B cell (primary cell): ENCODE measurements at regions of chr6 and their contacts with region 1.

Region 1: DNA sequence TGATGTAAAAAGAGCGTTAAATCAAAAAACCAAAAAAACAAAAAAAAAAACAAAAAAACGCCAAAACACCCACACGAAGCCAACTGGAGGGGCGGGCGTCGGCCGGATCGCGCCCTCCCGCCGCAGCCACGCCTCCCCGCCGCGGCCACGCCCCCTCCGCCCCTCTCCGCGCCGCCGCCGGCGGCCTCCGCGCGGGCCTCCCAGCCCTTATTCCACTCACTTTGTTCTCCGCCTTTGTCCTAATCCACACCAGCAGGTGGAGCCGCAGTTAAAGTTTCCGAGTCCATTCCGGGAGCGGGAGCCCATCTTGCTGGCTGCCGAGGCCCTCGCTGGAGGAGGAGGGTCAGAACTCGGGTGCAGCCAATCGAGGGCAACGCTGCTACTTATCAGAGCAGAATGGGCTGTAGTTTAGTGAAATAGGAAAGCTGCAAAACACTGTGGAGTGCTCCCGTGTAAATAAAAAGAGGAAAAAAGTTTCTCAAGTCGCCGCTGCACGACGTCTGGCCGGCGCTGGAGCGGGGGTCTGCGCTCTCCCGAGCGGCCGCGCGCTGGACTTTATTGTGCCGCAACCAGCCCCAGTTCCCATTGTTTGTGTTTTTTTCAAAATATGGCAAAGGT is at the start of gene ASF1A:
- DNase-seq: peak; percentile 92
- ATAC-seq: peak; percentile 66
- H3K4me3 ChIP-seq: peak within 1 kb of the TSS; percentile 84 to 99 (median 91)
- H3K4me3 Mint-ChIP-seq: peak within 1 kb of the TSS; percentile 91
- H3K27ac ChIP-seq: peak within 1 kb of the TSS; percentile 79 to 84
- H3K27ac Mint-ChIP-seq: peak within 1 kb of the TSS; percentile 95
- H3K4me1 ChIP-seq: peaks cover 33 to 34% of the 10 kb centered on the region in 2 donors
- H3K4me1 Mint-ChIP-seq: peaks cover 58% of the 10 kb centered on the region
- H3K27me3 ChIP-seq: no peaks in the 10 kb centered on the region
- H3K27me3 Mint-ChIP-seq: no peaks in the 10 kb centered on the region
- CTCF ChIP-seq: no peak
- total RNA-seq, gene ASF1A: 25.3 and 27.3 TPM in 2 replicates

Region 2: GRCh38 chr6:117674991-117675657 is 1218.8 kb before region 1 on chr6 and contains the start of gene NUS1:
- CTCF ChIA-PET with region 1: no interaction called
- POLR2A ChIA-PET with region 1: no interaction called
- intact Hi-C with region 1: loop called (anchors 2 kb)
- DNase-seq: peak; percentile 98
- ATAC-seq: peak; percentile 98
- H3K4me3 ChIP-seq: peak within 1 kb of the TSS; percentile 55 to 81 (median 65)
- H3K4me3 Mint-ChIP-seq: peak within 1 kb of the TSS; percentile 90
- H3K27ac ChIP-seq: peak within 1 kb of the TSS; percentile 55 to 75
- H3K27ac Mint-ChIP-seq: peak within 1 kb of the TSS; percentile 94
- H3K4me1 ChIP-seq: peaks cover 28 to 30% of the 10 kb centered on the region in 2 donors
- H3K4me1 Mint-ChIP-seq: peaks cover 42% of the 10 kb centered on the region
- H3K27me3 ChIP-seq: no peaks in the 10 kb centered on the region
- H3K27me3 Mint-ChIP-seq: no peaks in the 10 kb centered on the region
- CTCF ChIP-seq: peak; percentile 75
- total RNA-seq, gene NUS1: 22.1 and 23.1 TPM in 2 replicates

Region 3: GRCh38 chr6:118651282-118652050 is 242.4 kb before region 1 on chr6 and contains the start of gene CEP85L:
- CTCF ChIA-PET with region 1: interaction called, 3 read pairs
- POLR2A ChIA-PET with region 1: interaction called, 4 read pairs
- intact Hi-C with region 1: loop called (anchors 1 kb)
- DNase-seq: peak; percentile 92
- ATAC-seq: peak; percentile 91
- H3K4me3 ChIP-seq: peak within 1 kb of the TSS; percentile 59 to 89 (median 73)
- H3K4me3 Mint-ChIP-seq: peak within 1 kb of the TSS; percentile 98
- H3K27ac ChIP-seq: peak within 1 kb of the TSS; percentile 68 to 86
- H3K27ac Mint-ChIP-seq: peak within 1 kb of the TSS; percentile 96
- H3K4me1 ChIP-seq: peaks cover 12 to 13% of the 10 kb centered on the region in 2 donors
- H3K4me1 Mint-ChIP-seq: peaks cover 24% of the 10 kb centered on the region
- H3K27me3 ChIP-seq: no peaks in the 10 kb centered on the region
- H3K27me3 Mint-ChIP-seq: no peaks in the 10 kb centered on the region
- CTCF ChIP-seq: no peak
- total RNA-seq, gene CEP85L: 32.0 and 32.1 TPM in 2 replicates

Region 4: GRCh38 chr6:118724211-118724610 is 169.7 kb before region 1 on chr6:
- CTCF ChIA-PET with region 1: no interaction called
- POLR2A ChIA-PET with region 1: no interaction called
- intact Hi-C with region 1: loop called (anchors 5 kb)
- DNase-seq: peak; percentile 52
- ATAC-seq: peak; percentile 70
- H3K4me3 ChIP-seq: peak overlapping the region in 2 of 5 experiments; percentile 32 to 62
- H3K4me3 Mint-ChIP-seq: peak overlapping the region; percentile 53
- H3K27ac ChIP-seq: peak overlapping the region in 1 of 2 donors; percentile 61
- H3K27ac Mint-ChIP-seq: peak overlapping the region; percentile 13
- H3K4me1 ChIP-seq: peaks cover 42 to 43% of the 10 kb centered on the region in 2 donors
- H3K4me1 Mint-ChIP-seq: peaks cover 57% of the 10 kb centered on the region
- H3K27me3 ChIP-seq: no peaks in the 10 kb centered on the region
- H3K27me3 Mint-ChIP-seq: no peaks in the 10 kb centered on the region
- CTCF ChIP-seq: no peak

Region 5: GRCh38 chr6:118810420-118811027 is 83.4 kb before region 1 on chr6:
- CTCF ChIA-PET with region 1: interaction called, 20 read pairs
- POLR2A ChIA-PET with region 1: no interaction called
- intact Hi-C with region 1: loop called (anchors 5 kb)
- DNase-seq: peak; percentile 68
- ATAC-seq: peak; percentile 80
- H3K4me3 ChIP-seq: peak overlapping the region in 3 of 5 experiments; percentile 12 to 39 (median 38)
- H3K4me3 Mint-ChIP-seq: peak overlapping the region; percentile 78
- H3K27ac ChIP-seq: peak overlapping the region; percentile 21 to 75
- H3K27ac Mint-ChIP-seq: peak overlapping the region; percentile 90
- H3K4me1 ChIP-seq: peaks cover 27% of the 10 kb centered on the region in 2 donors
- H3K4me1 Mint-ChIP-seq: peaks cover 37% of the 10 kb centered on the region
- H3K27me3 ChIP-seq: no peaks in the 10 kb centered on the region
- H3K27me3 Mint-ChIP-seq: no peaks in the 10 kb centered on the region
- CTCF ChIP-seq: no peak

Region 6: GRCh38 chr6:118934461-118935330 is 40.8 kb after region 1 on chr6 and contains the start of gene MCM9:
- CTCF ChIA-PET with region 1: interaction called, 4 read pairs
- POLR2A ChIA-PET with region 1: interaction called, 6 read pairs
- intact Hi-C with region 1: loop called (anchors 1 kb)
- DNase-seq: peak; percentile 93
- ATAC-seq: peak; percentile 89
- H3K4me3 ChIP-seq: peak within 1 kb of the TSS; percentile 91 to 99 (median 94)
- H3K4me3 Mint-ChIP-seq: peak within 1 kb of the TSS; percentile 92
- H3K27ac ChIP-seq: peak within 1 kb of the TSS; percentile 83 to 90
- H3K27ac Mint-ChIP-seq: peak within 1 kb of the TSS; percentile 92
- H3K4me1 ChIP-seq: peaks cover 10 to 18% of the 10 kb centered on the region in 2 donors
- H3K4me1 Mint-ChIP-seq: peaks cover 35% of the 10 kb centered on the region
- H3K27me3 ChIP-seq: no peaks in the 10 kb centered on the region
- H3K27me3 Mint-ChIP-seq: no peaks in the 10 kb centered on the region
- CTCF ChIP-seq: no peak
- total RNA-seq, gene MCM9: 51.0 and 54.5 TPM in 2 replicates

Region 7: DNA sequence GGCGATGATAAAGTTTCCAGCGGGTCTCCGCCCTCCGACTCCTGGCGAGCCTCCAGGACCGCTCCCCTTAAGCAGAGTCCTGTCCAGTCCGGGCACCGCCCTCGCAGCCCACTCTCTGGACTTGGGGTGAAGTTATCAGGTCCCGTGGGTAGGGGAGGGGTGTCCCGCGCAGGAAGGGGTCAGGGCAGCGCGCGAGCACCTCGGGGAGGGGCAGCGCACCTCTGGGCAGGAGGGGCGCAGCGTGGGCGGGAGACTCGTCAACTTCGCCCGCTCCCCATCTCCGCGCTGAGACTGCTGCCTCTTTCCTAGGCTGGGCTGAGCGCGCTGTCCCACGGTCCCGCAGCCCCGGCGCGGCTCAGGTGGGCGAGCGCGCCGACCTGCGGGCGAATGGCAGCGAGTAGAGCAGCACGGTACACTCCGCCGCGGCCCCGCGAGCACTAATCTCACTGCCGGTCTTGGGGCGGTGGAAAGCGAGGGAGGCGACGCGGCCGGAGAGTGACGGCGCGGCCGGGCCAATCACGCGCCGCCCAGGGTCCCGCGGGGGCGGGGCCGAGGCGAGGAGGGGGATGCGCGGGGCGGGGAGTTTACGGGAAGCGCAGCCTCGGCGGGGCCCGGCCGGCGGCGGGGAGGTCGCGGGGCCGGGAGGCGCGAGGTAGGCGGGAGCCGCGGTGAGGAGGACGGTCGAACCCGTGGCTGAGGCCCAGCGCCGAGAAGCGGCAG is 455.6 kb after region 1 on chr6 and contains the start of gene MAN1A1:
- CTCF ChIA-PET with region 1: no interaction called
- POLR2A ChIA-PET with region 1: no interaction called
- intact Hi-C with region 1: loop called (anchors 5 kb)
- DNase-seq: peak; percentile 94
- ATAC-seq: peak; percentile 83
- H3K4me3 ChIP-seq: peak within 1 kb of the TSS; percentile 73 to 95 (median 88)
- H3K4me3 Mint-ChIP-seq: peak within 1 kb of the TSS; percentile 90
- H3K27ac ChIP-seq: peak within 1 kb of the TSS; percentile 85 to 94
- H3K27ac Mint-ChIP-seq: peak within 1 kb of the TSS; percentile 80
- H3K4me1 ChIP-seq: peaks cover 35 to 58% of the 10 kb centered on the region in 2 donors
- H3K4me1 Mint-ChIP-seq: peaks cover 55% of the 10 kb centered on the region
- H3K27me3 ChIP-seq: no peaks in the 10 kb centered on the region
- H3K27me3 Mint-ChIP-seq: no peaks in the 10 kb centered on the region
- CTCF ChIP-seq: no peak
- total RNA-seq, gene MAN1A1: 31.5 and 31.7 TPM in 2 replicates